CD8-positive, alpha-beta memory T cell (primary cell): ENCODE measurements at regions of chr14 and their contacts with region 1.

Region 1: DNA sequence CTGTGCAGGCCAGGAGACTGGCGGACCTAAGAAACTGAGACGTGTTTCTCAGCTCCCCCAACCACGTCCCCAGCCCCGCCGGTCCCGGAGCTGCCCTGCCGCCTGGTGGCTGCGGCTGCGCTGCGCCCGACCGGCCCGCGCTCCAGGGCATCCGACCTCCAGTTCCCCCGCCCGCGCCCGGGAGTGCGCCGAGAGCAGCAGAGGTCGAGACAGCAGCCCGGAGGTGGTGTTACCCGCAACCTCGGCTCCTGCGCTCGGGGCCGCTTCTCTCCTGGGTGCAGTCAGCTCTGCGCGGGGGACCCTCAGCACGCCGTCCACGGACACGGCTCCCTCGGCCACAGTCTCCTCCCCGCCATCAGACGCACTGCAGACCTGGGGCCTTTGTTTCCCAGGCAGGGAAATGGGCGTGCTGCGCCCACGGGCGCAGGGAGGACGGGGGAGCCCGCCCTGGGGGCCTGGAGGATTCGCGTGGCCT is 21.6 kb upstream of the GPR132 start:
- DNase-seq: peak; percentile 74 to 88 (median 85)
- H3K4me3 ChIP-seq: peak overlapping the region; percentile 67
- H3K4me3 Mint-ChIP-seq: peak overlapping the region; percentile 77 to 91 (median 80)
- H3K27ac ChIP-seq: peak overlapping the region; percentile 47
- H3K27ac Mint-ChIP-seq: peak overlapping the region in 7 of 8 donors; percentile 50 to 95 (median 83)
- H3K4me1 ChIP-seq: peaks cover 19% of the 10 kb centered on the region
- H3K4me1 Mint-ChIP-seq: peaks cover 5 to 26% (median 11%) of the 10 kb centered on the region in 3 donors
- H3K27me3 ChIP-seq: no peaks in the 10 kb centered on the region
- H3K27me3 Mint-ChIP-seq: no peaks in the 10 kb centered on the region

Region 2: GRCh38 chr14:104976198-104977007 is 110.5 kb before region 1 on chr14:
- CTCF ChIA-PET with region 1: interaction called, 16 read pairs
- POLR2A ChIA-PET with region 1: no interaction called
- DNase-seq: peak; percentile 75 to 88 (median 84)
- H3K4me3 ChIP-seq: no peak overlapping the region
- H3K4me3 Mint-ChIP-seq: peak overlapping the region in 6 of 7 donors; percentile 32 to 82 (median 68)
- H3K27ac ChIP-seq: no peak overlapping the region
- H3K27ac Mint-ChIP-seq: peak overlapping the region in 3 of 8 donors; percentile 37 to 87 (median 43)
- H3K4me1 ChIP-seq: peaks cover 7% of the 10 kb centered on the region
- H3K4me1 Mint-ChIP-seq: peaks cover 5 to 27% (median 11%) of the 10 kb centered on the region in 3 donors
- H3K27me3 ChIP-seq: peaks cover 16% of the 10 kb centered on the region
- H3K27me3 Mint-ChIP-seq: peaks cover 22 to 38% of the 10 kb centered on the region in 2 donors

Region 3: GRCh38 chr14:104991904-104992255 is 95.0 kb before region 1 on chr14:
- CTCF ChIA-PET with region 1: no interaction called
- POLR2A ChIA-PET with region 1: no interaction called
- DNase-seq: no peak
- H3K4me3 ChIP-seq: no peak overlapping the region
- H3K4me3 Mint-ChIP-seq: peak overlapping the region in 1 of 7 donors; percentile 71
- H3K27ac ChIP-seq: no peak overlapping the region
- H3K27ac Mint-ChIP-seq: peak overlapping the region in 2 of 8 donors; percentile 60 to 61
- H3K4me1 ChIP-seq: no peaks in the 10 kb centered on the region
- H3K4me1 Mint-ChIP-seq: peaks cover 0 to 3% (median 3%) of the 10 kb centered on the region in 3 donors
- H3K27me3 ChIP-seq: no peaks in the 10 kb centered on the region
- H3K27me3 Mint-ChIP-seq: peaks cover 0 to 3% of the 10 kb centered on the region in 2 donors

Region 4: GRCh38 chr14:105034314-105035039 is 52.4 kb before region 1 on chr14:
- CTCF ChIA-PET with region 1: interaction called, 3 read pairs
- POLR2A ChIA-PET with region 1: interaction called, 11 read pairs
- DNase-seq: no peak
- H3K4me3 ChIP-seq: no peak overlapping the region
- H3K4me3 Mint-ChIP-seq: peak overlapping the region; percentile 43 to 96 (median 90)
- H3K27ac ChIP-seq: no peak overlapping the region
- H3K27ac Mint-ChIP-seq: peak overlapping the region in 7 of 8 donors; percentile 35 to 95 (median 90)
- H3K4me1 ChIP-seq: peaks cover 4% of the 10 kb centered on the region
- H3K4me1 Mint-ChIP-seq: peaks cover 17 to 22% (median 22%) of the 10 kb centered on the region in 3 donors
- H3K27me3 ChIP-seq: no peaks in the 10 kb centered on the region
- H3K27me3 Mint-ChIP-seq: no peaks in the 10 kb centered on the region

Region 5: GRCh38 chr14:105065280-105066228 is 21.3 kb before region 1 on chr14 and contains the start of gene GPR132:
- CTCF ChIA-PET with region 1: interaction called, 153 read pairs
- POLR2A ChIA-PET with region 1: interaction called, 34 read pairs
- DNase-seq: peak; percentile 82 to 97 (median 96)
- H3K4me3 ChIP-seq: peak within 1 kb of the TSS; percentile 99
- H3K4me3 Mint-ChIP-seq: peak within 1 kb of the TSS; percentile 88 to 100 (median 94)
- H3K27ac ChIP-seq: peak within 1 kb of the TSS; percentile 89
- H3K27ac Mint-ChIP-seq: peak within 1 kb of the TSS; percentile 94 to 100 (median 98)
- H3K4me1 ChIP-seq: peaks cover 86% of the 10 kb centered on the region
- H3K4me1 Mint-ChIP-seq: peaks cover 63 to 91% (median 69%) of the 10 kb centered on the region in 3 donors
- H3K27me3 ChIP-seq: no peaks in the 10 kb centered on the region
- H3K27me3 Mint-ChIP-seq: peaks cover 0 to 2% of the 10 kb centered on the region in 2 donors
- total RNA-seq, gene GPR132: 51.3 to 52.0 TPM

Region 6: DNA sequence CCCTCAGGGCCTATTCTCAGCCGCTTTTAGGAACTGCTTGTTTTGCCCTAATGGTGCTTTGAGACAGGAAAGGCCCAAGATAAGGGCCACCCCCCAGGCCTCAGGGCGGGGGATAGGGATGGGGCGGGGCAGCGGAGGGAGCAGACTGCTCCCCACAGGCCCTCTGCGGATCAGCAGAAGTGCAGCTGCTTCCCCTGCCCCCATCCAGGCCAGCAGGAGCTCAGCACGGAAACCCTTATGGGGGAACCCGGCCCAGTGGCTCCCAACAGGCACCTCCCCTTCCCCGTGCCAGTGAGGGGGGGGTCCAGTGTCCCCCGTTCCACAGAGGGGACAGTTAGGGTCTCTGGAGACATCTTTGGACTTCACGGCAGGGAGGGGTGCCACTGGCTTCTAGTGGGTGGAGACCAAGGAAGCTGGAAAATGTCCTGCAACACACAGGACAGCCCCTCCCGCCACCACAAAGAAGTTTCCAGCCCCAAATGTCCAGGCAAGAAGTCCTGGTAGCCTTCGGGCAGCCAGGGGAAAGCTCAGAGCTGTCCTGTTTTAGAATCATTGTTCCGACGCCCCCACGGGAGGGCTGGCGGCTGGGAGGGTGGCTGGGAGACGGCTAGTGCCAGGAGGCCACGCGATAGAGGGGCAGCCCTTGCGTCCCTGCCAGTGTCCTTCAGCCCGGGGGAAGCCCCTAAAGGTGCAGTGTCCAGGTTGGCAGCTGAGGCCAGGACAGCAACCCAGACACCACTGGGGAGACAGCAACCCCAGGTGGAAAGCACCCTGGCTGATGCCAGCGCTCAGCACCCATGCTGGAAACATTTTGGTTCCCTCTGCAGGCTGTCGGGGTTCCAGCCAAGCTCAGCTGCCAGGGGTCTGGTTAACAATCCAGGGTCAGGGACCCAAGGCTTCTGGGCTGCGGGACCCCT is 11.2 kb before region 1 on chr14:
- CTCF ChIA-PET with region 1: interaction called, 90 read pairs
- POLR2A ChIA-PET with region 1: interaction called, 10 read pairs
- DNase-seq: no peak
- H3K4me3 ChIP-seq: no peak overlapping the region
- H3K4me3 Mint-ChIP-seq: peak overlapping the region in 2 of 7 donors; percentile 25 to 68
- H3K27ac ChIP-seq: peak overlapping the region; percentile 9
- H3K27ac Mint-ChIP-seq: peak overlapping the region in 2 of 8 donors; percentile 12 to 61
- H3K4me1 ChIP-seq: peaks cover 32% of the 10 kb centered on the region
- H3K4me1 Mint-ChIP-seq: peaks cover 27 to 56% (median 34%) of the 10 kb centered on the region in 3 donors
- H3K27me3 ChIP-seq: no peaks in the 10 kb centered on the region
- H3K27me3 Mint-ChIP-seq: no peaks in the 10 kb centered on the region

Region 7: DNA sequence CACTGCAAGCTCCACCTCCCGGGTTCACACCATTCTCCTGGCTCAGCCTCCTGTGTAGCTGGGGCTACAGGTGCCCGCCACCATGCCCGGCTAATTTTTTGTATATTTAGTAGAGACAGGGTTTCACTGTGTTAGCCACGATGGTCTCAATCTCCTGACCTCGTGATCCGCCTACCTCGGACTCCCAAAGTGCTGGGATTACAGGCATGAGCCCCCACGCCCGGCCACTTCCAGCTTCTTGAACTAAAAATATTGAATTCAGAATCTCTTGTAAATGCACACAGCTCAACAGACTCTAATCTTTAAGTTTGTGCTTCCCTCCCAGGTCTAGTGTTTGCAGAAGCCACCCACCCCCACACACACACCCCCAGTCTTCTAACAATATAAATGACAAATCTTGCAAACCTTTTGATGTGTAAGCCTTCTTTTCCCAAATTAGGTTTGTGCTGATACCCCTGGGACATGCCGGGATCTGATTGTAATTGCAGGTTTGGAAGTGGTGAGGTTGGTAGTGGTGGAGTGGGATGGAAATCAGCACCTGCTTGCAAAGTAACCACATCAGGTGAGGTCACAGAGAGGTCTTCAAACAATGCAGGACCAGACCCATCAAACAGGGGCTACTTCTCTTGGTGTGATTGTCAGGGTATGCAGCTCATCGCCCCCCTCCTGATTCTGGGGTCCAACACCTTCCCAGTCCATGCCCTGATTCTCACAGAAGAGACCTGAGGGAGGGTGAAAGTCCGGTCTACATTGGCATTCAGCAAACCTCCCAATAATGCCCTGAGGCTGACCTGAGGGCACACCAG is 29.8 kb after region 1 on chr14:
- CTCF ChIA-PET with region 1: no interaction called
- POLR2A ChIA-PET with region 1: no interaction called
- DNase-seq: no peak
- H3K4me3 ChIP-seq: no peak overlapping the region
- H3K4me3 Mint-ChIP-seq: no peak overlapping the region
- H3K27ac ChIP-seq: no peak overlapping the region
- H3K27ac Mint-ChIP-seq: no peak overlapping the region
- H3K4me1 ChIP-seq: no peaks in the 10 kb centered on the region
- H3K4me1 Mint-ChIP-seq: no peaks in the 10 kb centered on the region
- H3K27me3 ChIP-seq: peaks cover 4% of the 10 kb centered on the region
- H3K27me3 Mint-ChIP-seq: peaks cover 18 to 45% of the 10 kb centered on the region in 2 donors

Region 8: GRCh38 chr14:105351920-105352851 is 265.3 kb after region 1 on chr14:
- CTCF ChIA-PET with region 1: interaction called, 32 read pairs
- POLR2A ChIA-PET with region 1: interaction called, 3 read pairs
- DNase-seq: peak; percentile 72 to 90 (median 77)
- H3K4me3 ChIP-seq: no peak overlapping the region
- H3K4me3 Mint-ChIP-seq: no peak overlapping the region
- H3K27ac ChIP-seq: no peak overlapping the region
- H3K27ac Mint-ChIP-seq: peak overlapping the region in 3 of 8 donors; percentile 47 to 85 (median 73)
- H3K4me1 ChIP-seq: peaks cover 4% of the 10 kb centered on the region
- H3K4me1 Mint-ChIP-seq: peaks cover 0 to 6% (median 3%) of the 10 kb centered on the region in 3 donors
- H3K27me3 ChIP-seq: no peaks in the 10 kb centered on the region
- H3K27me3 Mint-ChIP-seq: no peaks in the 10 kb centered on the region